ENCODE measurements at regions of chr17 and their contacts with region 1.

Region 1: GRCh38 chr17:27430882-27431491 is 25.3 kb upstream of the KSR1 start:
- DNase-seq: peak; percentile 41
- H3K4me3 ChIP-seq: no peak overlapping the region
- H3K27ac ChIP-seq: no peak overlapping the region
- H3K4me1 ChIP-seq: no peaks in the 10 kb centered on the region
- H3K27me3 ChIP-seq: no peaks in the 10 kb centered on the region
- CTCF ChIP-seq: peak; percentile 55

Region 2: GRCh38 chr17:27315322-27315721 is 115.7 kb before region 1 on chr17:
- CTCF ChIA-PET with region 1: no interaction called
- POLR2A ChIA-PET with region 1: interaction called, 14 read pairs
- intact Hi-C with region 1: no loop called
- DNase-seq: peak; percentile 75
- H3K4me3 ChIP-seq: no peak overlapping the region
- H3K27ac ChIP-seq: peak overlapping the region; percentile 67
- H3K4me1 ChIP-seq: peaks cover 12% of the 10 kb centered on the region
- H3K27me3 ChIP-seq: no peaks in the 10 kb centered on the region
- CTCF ChIP-seq: no peak

Measured in A673 (cell line).